ENCODE measurements at regions of chr11 and their contacts with region 1.

Region 1: DNA sequence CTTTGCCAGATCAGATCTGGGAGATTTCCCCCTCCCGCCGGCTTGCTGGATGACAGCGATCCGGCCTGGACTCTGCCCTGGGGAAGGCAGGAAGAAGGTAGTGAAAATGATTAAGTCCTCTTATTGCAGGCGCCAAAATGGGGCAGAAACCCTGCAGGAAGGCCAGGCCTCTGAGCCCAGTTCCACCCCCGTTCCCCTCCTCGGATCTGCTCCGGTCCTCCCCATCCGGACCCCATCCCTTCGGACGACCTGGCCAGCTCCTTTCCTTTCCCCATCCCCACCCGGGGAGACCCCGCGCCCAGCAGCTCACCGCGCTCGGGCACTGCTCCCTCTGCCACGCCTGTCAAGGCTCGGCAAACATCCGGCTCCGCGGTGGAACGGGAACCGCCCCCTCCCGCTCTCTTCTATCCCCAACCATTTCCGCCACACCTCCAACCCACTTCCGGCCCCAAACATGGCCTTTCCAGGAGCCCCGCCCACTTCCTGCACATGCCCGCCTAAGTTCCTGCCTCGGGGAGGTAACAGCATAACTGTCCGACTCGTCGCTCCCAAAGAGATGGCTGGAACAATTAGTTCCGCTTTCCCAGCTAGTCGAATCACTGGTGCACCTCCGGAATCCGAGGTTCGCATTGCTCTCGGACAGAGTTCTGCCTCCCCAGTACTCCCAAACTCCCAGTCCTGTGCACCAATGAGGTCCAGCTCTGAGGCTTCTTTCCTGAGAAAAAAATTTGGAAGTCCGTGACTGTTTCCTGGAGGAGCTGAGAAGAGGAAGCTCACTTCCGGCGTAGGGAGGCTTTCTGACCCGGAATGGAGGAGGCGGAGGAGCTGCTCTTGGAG is at the starts of genes ARHGAP1 and ZNF408:
- DNase-seq: peak; percentile 99
- ATAC-seq: peak; percentile 90
- H3K4me3 ChIP-seq: peak within 1 kb of the TSS; percentile 87 to 100 (median 98)
- H3K4me3 Mint-ChIP-seq: peak within 1 kb of the TSS; percentile 96
- H3K27ac ChIP-seq: peak within 1 kb of the TSS; percentile 47 to 86
- H3K27ac Mint-ChIP-seq: peak within 1 kb of the TSS; percentile 93
- H3K4me1 ChIP-seq: peaks cover 30 to 39% of the 10 kb centered on the region in 2 donors
- H3K4me1 Mint-ChIP-seq: peaks cover 43% of the 10 kb centered on the region
- H3K27me3 ChIP-seq: no peaks in the 10 kb centered on the region
- H3K27me3 Mint-ChIP-seq: no peaks in the 10 kb centered on the region
- CTCF ChIP-seq: no peak
- total RNA-seq, gene ARHGAP1: 55.0 and 56.8 TPM in 2 replicates
- total RNA-seq, gene ZNF408: 19.2 and 22.3 TPM in 2 replicates

Region 2: DNA sequence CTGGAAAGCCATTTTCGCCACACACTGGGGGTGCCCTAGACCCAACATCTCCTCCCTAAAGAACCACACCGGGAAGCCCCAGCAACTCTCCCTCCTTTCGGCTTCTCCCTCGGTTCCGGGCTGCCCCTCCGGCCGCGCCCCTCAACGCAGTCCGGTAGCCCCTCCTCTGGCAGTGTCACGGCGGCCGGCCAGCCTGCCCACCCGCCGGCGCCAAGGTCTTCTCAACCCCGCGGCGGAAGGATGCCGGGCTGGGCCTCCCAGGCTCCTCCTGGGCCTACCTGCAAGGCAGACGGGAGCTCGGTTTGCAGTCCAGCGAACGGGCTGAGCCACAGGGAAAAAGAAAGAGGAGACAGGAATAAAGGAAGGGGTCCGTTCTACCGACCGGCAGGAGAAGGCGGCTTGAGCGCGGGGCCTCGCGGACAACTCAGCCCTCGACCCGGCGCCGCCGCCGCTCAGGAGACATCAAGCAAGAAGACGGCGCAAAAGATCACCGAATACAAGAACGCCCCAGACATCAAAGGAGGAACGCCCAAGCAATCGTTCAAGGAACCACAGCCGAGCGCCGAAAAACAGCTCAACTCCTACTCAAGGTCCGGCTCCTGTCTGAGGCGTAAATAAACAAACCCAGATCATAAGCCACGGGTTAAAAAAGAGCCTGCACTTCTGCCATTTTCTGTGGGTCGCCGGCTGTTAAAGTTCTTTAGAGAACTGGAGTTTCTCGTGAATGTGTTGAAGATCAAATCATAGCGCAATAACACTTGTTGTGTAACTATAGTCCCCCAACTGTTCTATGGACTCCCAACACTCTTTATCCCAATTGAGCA is 106.7 kb before region 1 on chr11 and contains the start of gene AMBRA1:
- CTCF ChIA-PET with region 1: interaction called, 3 read pairs
- POLR2A ChIA-PET with region 1: no interaction called
- intact Hi-C with region 1: loop called (anchors 1 kb)
- DNase-seq: peak; percentile 90
- ATAC-seq: peak; percentile 92
- H3K4me3 ChIP-seq: peak within 1 kb of the TSS; percentile 71 to 98 (median 80)
- H3K4me3 Mint-ChIP-seq: peak within 1 kb of the TSS; percentile 93
- H3K27ac ChIP-seq: peak within 1 kb of the TSS; percentile 58 to 78
- H3K27ac Mint-ChIP-seq: peak within 1 kb of the TSS; percentile 91
- H3K4me1 ChIP-seq: peaks cover 18 to 21% of the 10 kb centered on the region in 2 donors
- H3K4me1 Mint-ChIP-seq: peaks cover 39% of the 10 kb centered on the region
- H3K27me3 ChIP-seq: no peaks in the 10 kb centered on the region
- H3K27me3 Mint-ChIP-seq: no peaks in the 10 kb centered on the region
- CTCF ChIP-seq: no peak
- total RNA-seq, gene AMBRA1: 36.1 and 47.4 TPM in 2 replicates

Region 3: GRCh38 chr11:46616998-46617675 is 83.3 kb before region 1 on chr11 and contains the starts of genes ATG13 and HARBI1:
- CTCF ChIA-PET with region 1: interaction called, 3 read pairs
- POLR2A ChIA-PET with region 1: interaction called, 4 read pairs
- intact Hi-C with region 1: loop called (anchors 1 kb)
- DNase-seq: peak; percentile 96
- ATAC-seq: peak; percentile 94
- H3K4me3 ChIP-seq: peak within 1 kb of the TSS; percentile 84 to 100 (median 100)
- H3K4me3 Mint-ChIP-seq: peak within 1 kb of the TSS; percentile 99
- H3K27ac ChIP-seq: peak within 1 kb of the TSS; percentile 99 to 100
- H3K27ac Mint-ChIP-seq: peak within 1 kb of the TSS; percentile 100
- H3K4me1 ChIP-seq: peaks cover 17 to 22% of the 10 kb centered on the region in 2 donors
- H3K4me1 Mint-ChIP-seq: peaks cover 30% of the 10 kb centered on the region
- H3K27me3 ChIP-seq: no peaks in the 10 kb centered on the region
- H3K27me3 Mint-ChIP-seq: no peaks in the 10 kb centered on the region
- CTCF ChIP-seq: no peak
- total RNA-seq, gene ATG13: 88.8 and 92.8 TPM in 2 replicates
- total RNA-seq, gene HARBI1: 6.7 and 8.0 TPM in 2 replicates

Region 4: GRCh38 chr11:46845740-46846509 is 145.5 kb after region 1 on chr11 and contains the start of gene CKAP5:
- CTCF ChIA-PET with region 1: no interaction called
- POLR2A ChIA-PET with region 1: no interaction called
- intact Hi-C with region 1: loop called (anchors 1 kb)
- DNase-seq: peak; percentile 91
- ATAC-seq: peak; percentile 89
- H3K4me3 ChIP-seq: peak within 1 kb of the TSS; percentile 36 to 89 (median 83)
- H3K4me3 Mint-ChIP-seq: peak within 1 kb of the TSS; percentile 97
- H3K27ac ChIP-seq: peak within 1 kb of the TSS; percentile 65 to 67
- H3K27ac Mint-ChIP-seq: peak within 1 kb of the TSS; percentile 97
- H3K4me1 ChIP-seq: peaks cover 12 to 15% of the 10 kb centered on the region in 2 donors
- H3K4me1 Mint-ChIP-seq: peaks cover 31% of the 10 kb centered on the region
- H3K27me3 ChIP-seq: no peaks in the 10 kb centered on the region
- H3K27me3 Mint-ChIP-seq: no peaks in the 10 kb centered on the region
- CTCF ChIP-seq: no peak
- total RNA-seq, gene CKAP5: 49.4 and 54.3 TPM in 2 replicates

Region 5: GRCh38 chr11:46936138-46937110 is 236.0 kb after region 1 on chr11 and contains the start of gene CSTPP1:
- CTCF ChIA-PET with region 1: no interaction called
- POLR2A ChIA-PET with region 1: no interaction called
- intact Hi-C with region 1: loop called (anchors 2 kb)
- DNase-seq: peak; percentile 93
- ATAC-seq: peak; percentile 90
- H3K4me3 ChIP-seq: peak within 1 kb of the TSS; percentile 38 to 67 (median 64)
- H3K4me3 Mint-ChIP-seq: peak within 1 kb of the TSS; percentile 90
- H3K27ac ChIP-seq: peak within 1 kb of the TSS; percentile 30 to 69
- H3K27ac Mint-ChIP-seq: peak within 1 kb of the TSS; percentile 85
- H3K4me1 ChIP-seq: peaks cover 5 to 12% of the 10 kb centered on the region in 2 donors
- H3K4me1 Mint-ChIP-seq: peaks cover 18% of the 10 kb centered on the region
- H3K27me3 ChIP-seq: peaks cover 0 to 5% (median 0%) of the 10 kb centered on the region in 4 experiments
- H3K27me3 Mint-ChIP-seq: peaks cover 13% of the 10 kb centered on the region
- CTCF ChIP-seq: no peak
- total RNA-seq, gene CSTPP1: 27.4 and 29.0 TPM in 2 replicates